ENCODE measurements at regions of chr13 and their contacts with region 1.

Region 1: GRCh38 chr13:32427852-32428580 is at the start of gene N4BP2L1:
- DNase-seq: peak; percentile 52 to 95 (median 76)

Region 2: DNA sequence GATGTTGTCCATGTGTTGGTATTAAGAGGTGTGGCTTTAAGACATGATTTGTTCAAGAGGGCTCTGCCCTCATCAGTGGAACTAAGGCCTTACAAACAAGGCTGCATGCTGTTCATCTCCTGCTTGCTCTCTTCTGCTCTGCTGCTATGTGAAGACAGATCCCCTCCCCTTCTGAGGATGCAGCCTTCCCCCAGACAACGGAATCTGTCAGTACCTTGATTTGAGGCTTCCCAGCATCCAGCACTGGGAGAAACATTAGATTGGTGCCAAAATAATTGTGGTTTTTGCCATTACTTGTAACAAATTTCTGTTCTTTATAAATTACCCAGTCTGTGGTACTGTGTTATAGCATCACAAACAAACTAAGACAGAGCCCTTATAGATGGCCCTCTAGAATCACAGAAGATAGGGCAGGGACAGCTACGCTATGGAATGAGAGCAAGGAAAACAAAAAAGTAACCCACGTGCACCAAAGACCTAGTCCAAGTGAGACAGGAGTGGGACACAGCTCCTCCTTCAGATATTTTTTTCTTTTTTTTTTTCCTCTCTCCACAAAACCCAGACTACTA is 840.2 kb before region 1 on chr13:
- intact Hi-C with region 1: no loop called
- DNase-seq: no peak

Region 3: GRCh38 chr13:32528358-32528757 is 100.3 kb after region 1 on chr13:
- intact Hi-C with region 1: no loop called
- DNase-seq: no peak

Region 4: DNA sequence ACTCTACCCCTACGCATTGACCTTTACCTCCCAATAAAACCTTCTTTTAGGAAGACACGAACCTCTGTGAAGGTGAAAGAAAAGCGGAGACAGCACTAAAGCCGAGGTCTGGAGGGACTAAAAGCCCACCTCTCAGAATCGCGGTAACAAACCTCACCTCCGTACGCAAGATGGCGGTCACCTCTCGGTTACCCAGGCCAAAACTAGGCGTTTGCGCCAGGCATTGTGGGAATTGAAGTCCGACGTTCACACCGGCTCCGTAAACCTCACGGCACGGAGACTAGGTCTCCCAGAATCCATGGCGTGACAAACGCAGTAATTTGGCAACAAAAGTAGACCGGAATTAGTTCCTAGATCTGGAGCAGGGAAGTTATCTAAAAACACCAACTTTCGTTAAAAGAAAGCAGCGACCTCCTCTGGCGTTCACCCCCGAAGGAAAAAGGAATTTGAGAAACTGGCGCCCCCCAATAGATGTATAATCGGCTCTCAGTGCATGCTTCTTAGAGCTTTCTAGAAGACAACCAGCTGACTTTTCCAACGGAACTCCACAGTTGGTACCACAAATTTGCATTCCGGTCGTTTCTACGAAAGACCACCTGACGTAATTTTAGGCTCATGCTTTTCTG is 110.7 kb after region 1 on chr13 and contains the start of gene N4BP2L2:
- intact Hi-C with region 1: loop called (anchors 1 kb)
- DNase-seq: peak; percentile 91 to 99 (median 94)

Region 5: GRCh38 chr13:32553720-32554119 is 125.7 kb after region 1 on chr13:
- intact Hi-C with region 1: no loop called
- DNase-seq: no peak